ENCODE measurements at regions of chr1 and their contacts with region 1.

Region 1: GRCh38 chr1:17027403-17027802 is 15.7 kb upstream of the ATP13A2 start:
- DNase-seq: no peak
- H3K4me3 ChIP-seq: no peak overlapping the region
- H3K27ac ChIP-seq: no peak overlapping the region
- H3K4me1 ChIP-seq: peaks cover 6% of the 10 kb centered on the region
- H3K27me3 ChIP-seq: no peaks in the 10 kb centered on the region
- CTCF ChIP-seq: no peak

Region 2: DNA sequence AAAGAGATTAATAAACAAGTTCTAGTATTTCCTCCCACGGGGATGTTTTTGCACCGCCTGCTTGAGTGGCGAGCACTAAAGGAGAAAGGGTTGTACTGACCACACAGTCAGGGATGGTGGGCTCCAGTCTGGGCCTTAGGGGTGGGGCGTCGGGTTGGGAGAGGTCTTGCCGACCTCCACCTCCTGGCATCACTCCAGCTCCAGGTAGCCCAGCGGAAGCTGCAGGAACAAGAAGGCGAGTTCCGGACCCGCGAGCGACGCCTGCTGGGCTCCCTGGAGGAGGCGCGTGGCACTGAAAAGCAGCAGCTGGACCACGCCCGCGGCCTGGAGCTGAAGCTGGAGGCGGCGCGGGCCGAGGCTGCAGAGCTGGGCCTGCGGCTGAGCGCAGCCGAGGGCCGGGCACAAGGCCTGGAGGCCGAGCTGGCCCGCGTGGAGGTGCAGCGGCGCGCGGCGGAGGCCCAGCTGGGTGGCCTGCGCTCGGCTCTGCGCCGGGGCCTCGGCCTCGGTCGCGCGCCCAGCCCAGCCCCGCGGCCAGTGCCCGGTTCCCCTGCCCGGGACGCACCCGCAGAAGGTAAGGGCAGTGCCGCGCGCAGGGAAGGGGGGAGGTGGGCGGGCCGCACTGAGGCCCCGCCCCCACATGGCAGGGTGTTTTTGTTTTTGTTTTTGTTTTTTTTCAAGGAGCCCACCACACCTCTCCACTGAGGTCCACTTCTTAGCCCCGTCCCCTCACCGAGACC is 66.7 kb before region 1 on chr1:
- CTCF ChIA-PET with region 1: no interaction called
- dilution Hi-C with region 1: no loop called
- in situ Hi-C with region 1: loop called in 1 of 2 experiments (anchors 10 kb)
- intact Hi-C with region 1: no loop called
- DNase-seq: no peak
- H3K4me3 ChIP-seq: no peak overlapping the region
- H3K27ac ChIP-seq: no peak overlapping the region
- H3K4me1 ChIP-seq: no peaks in the 10 kb centered on the region
- H3K27me3 ChIP-seq: no peaks in the 10 kb centered on the region
- CTCF ChIP-seq: no peak

Region 3: DNA sequence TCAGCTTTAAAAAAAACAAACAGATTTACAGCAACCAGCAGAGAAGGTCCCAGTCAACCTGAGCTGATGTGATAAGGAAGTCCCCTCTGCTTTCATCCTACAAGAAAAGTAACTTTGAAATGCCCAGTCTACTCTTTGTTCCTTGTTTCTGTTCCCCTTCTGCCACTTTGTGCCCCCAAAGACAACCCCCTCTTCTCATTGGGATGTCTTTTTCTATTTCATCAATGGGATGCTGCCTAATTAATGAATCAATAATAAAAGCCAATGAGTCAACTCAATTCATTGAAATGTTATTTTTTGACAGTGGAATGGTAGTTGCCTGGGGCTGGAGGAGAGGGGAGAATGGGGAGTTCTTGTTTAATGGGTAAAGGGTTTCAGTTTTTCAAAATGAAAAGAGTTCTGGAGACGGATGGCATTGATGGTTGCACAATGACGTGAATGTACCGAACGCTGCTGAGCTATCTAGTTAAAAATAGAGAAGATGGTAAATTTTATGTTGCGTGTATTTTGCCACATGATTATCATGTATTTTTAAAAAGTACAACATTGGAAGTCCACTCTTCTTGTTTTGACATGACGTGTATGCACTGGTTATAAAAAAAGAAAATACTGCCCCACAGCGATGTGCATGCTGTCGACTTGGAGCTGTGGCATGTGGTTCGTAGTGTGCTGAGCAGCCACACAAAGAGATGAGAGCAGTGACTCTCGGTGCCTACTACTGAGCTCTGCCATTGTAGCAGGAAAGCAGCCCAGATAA is 114.2 kb after region 1 on chr1:
- CTCF ChIA-PET with region 1: no interaction called
- dilution Hi-C with region 1: no loop called
- in situ Hi-C with region 1: no loop called
- intact Hi-C with region 1: no loop called
- DNase-seq: no peak
- H3K4me3 ChIP-seq: no peak overlapping the region
- H3K27ac ChIP-seq: no peak overlapping the region
- H3K4me1 ChIP-seq: peaks cover 5% of the 10 kb centered on the region
- H3K27me3 ChIP-seq: no peaks in the 10 kb centered on the region
- CTCF ChIP-seq: no peak

Measured in mammary epithelial cell (primary cell).